AG04449 (cell line): ENCODE measurements at regions of chr10 and their contacts with region 1.

Region 1: GRCh38 chr10:104209575-104210198 is 22.5 kb downstream of the CFAP43 start:
- DNase-seq: no peak
- H3K4me3 ChIP-seq: no peak overlapping the region
- CTCF ChIP-seq: peak; percentile 55

Region 2: DNA sequence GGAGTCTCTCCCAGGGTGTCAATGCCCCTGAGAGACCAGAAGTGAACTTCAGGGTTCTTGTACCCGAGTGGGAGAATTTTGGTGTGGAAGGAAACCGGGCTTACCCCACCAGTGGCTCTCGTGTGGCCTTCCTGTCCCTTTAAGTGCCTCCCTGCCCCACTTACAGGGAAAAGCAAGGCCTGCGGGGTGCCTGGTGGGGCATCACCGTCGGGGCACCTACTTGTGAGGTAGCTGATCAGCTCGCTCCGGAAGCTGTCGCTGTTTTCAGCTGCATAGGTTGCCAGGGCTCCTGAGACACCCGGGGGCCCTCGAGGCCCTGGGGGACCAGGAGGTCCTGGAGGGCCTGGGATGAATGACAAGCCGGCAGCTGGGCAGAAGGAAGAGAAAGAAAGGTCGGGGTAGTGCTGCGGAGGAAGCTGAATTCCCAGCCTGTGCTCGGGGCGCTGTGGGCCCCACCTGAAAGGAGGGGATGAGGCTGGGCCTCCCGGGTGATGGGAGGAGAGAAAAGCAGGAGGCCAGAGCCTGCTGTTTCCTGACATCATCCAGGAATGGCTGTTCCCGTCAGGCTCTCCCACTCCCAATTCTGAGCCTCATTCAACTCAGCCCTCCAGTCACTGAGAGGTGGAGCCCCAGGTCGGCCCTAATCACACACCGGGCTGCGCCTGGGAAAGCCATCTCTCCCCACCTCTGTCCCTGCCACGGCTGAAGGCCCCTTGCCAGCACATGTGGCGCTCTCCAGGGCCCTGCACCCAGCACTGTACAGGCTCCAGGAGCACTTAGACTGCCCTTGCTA is 175.1 kb before region 1 on chr10:
- CTCF ChIA-PET with region 1: no interaction called
- POLR2A ChIA-PET with region 1: no interaction called
- DNase-seq: no peak
- H3K4me3 ChIP-seq: no peak overlapping the region
- CTCF ChIP-seq: no peak

Region 3: GRCh38 chr10:104045151-104046089 is 164.3 kb before region 1 on chr10:
- CTCF ChIA-PET with region 1: interaction called, 18 read pairs
- POLR2A ChIA-PET with region 1: no interaction called
- DNase-seq: no peak
- H3K4me3 ChIP-seq: no peak overlapping the region
- CTCF ChIP-seq: peak; percentile 79

Region 4: DNA sequence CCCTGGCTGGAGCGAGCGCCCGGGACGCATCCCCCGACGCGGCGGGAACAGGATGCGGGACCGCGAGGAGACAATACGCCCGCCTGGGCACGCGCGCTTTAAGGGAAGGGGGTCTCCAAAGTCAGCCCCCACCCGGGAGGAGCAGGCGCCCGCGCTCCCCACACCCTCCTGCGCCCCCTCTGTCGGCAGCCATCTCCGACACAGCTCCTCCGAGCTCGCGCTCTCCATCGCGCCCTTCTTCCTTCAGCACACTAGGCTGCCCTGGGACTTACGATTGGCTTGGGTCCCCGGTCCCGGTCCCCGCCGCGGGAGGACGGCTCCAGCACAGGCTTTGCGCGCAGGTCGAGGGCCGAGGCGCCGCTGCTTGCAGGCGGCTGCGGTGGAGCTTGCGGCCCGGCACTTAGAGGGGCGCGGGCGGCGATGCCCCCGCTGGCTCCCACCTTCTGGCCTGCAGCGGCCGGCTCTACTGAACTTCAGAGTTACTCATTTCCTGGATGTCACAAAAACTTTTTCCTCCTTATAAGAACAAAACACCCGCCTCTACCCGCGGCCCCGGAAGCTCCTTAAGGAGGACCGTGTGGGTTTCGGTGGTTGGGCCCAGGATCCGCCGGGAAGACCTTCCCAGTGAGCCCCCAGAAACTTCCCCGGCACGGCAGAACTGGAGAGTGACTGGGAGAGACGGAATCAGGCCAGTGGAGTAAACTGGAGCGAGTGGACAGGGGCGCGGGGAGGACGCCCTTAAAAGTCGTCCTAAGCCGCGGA is 128.5 kb after region 1 on chr10 and contains the start of gene ITPRIP:
- CTCF ChIA-PET with region 1: no interaction called
- POLR2A ChIA-PET with region 1: no interaction called
- DNase-seq: no peak
- H3K4me3 ChIP-seq: peak within 1 kb of the TSS; percentile 85
- CTCF ChIP-seq: peak; percentile 28